ENCODE measurements at regions of chr4 and their contacts with region 1.

Region 1: GRCh38 chr4:77862478-77863216 is at the start of gene MRPL1:
- DNase-seq: peak; percentile 94
- ATAC-seq: peak; percentile 99
- H3K4me3 ChIP-seq: peak within 1 kb of the TSS; percentile 83 to 84
- H3K27ac ChIP-seq: peak within 1 kb of the TSS; percentile 77 to 93
- H3K4me1 ChIP-seq: peaks cover 0 to 2% of the 10 kb centered on the region in 2 donors
- H3K27me3 ChIP-seq: no peaks in the 10 kb centered on the region
- total RNA-seq, gene MRPL1: 19.6 to 24.9 TPM

Region 2: GRCh38 chr4:77819843-77820648 is 42.6 kb before region 1 on chr4:
- intact Hi-C with region 1: loop called (anchors 1 to 2 kb)
- DNase-seq: peak; percentile 95 to 97
- ATAC-seq: peak; percentile 96
- H3K4me3 ChIP-seq: peak overlapping the region; percentile 97 to 99
- H3K27ac ChIP-seq: peak overlapping the region; percentile 97 to 99
- H3K4me1 ChIP-seq: peaks cover 0 to 2% of the 10 kb centered on the region in 2 donors
- H3K27me3 ChIP-seq: no peaks in the 10 kb centered on the region